ENCODE measurements at regions of chr7 and their contacts with region 1.

Region 1: GRCh38 chr7:22660732-22661131 is 66.3 kb upstream of the IL6 start:
- DNase-seq: no peak
- H3K4me3 ChIP-seq: no peak overlapping the region
- H3K4me3 Mint-ChIP-seq: no peak overlapping the region
- H3K27ac ChIP-seq: no peak overlapping the region
- H3K27ac Mint-ChIP-seq: peak overlapping the region in 1 of 7 donors; percentile 52
- H3K4me1 ChIP-seq: peaks cover 37 to 38% of the 10 kb centered on the region in 2 donors
- H3K4me1 Mint-ChIP-seq: peaks cover 44% of the 10 kb centered on the region
- H3K27me3 ChIP-seq: no peaks in the 10 kb centered on the region
- H3K27me3 Mint-ChIP-seq: peaks cover 0 to 6% (median 4%) of the 10 kb centered on the region in 3 donors
- CTCF ChIP-seq: peak; percentile 18

Region 2: GRCh38 chr7:22569586-22570321 is 91.0 kb before region 1 on chr7:
- intact Hi-C with region 1: loop called in 1 of 2 experiments (anchors 5 kb)
- DNase-seq: peak; percentile 88 to 97 (median 93)
- H3K4me3 ChIP-seq: peak overlapping the region in 1 of 3 experiments; percentile 11
- H3K4me3 Mint-ChIP-seq: peak overlapping the region in 1 of 2 donors; percentile 59
- H3K27ac ChIP-seq: no peak overlapping the region
- H3K27ac Mint-ChIP-seq: peak overlapping the region in 6 of 7 donors; percentile 15 to 81 (median 72)
- H3K4me1 ChIP-seq: peaks cover 60 to 62% of the 10 kb centered on the region in 2 donors
- H3K4me1 Mint-ChIP-seq: peaks cover 60% of the 10 kb centered on the region
- H3K27me3 ChIP-seq: peaks cover 18 to 20% of the 10 kb centered on the region in 2 donors
- H3K27me3 Mint-ChIP-seq: peaks cover 26 to 32% (median 30%) of the 10 kb centered on the region in 3 donors
- CTCF ChIP-seq: no peak

Region 3: DNA sequence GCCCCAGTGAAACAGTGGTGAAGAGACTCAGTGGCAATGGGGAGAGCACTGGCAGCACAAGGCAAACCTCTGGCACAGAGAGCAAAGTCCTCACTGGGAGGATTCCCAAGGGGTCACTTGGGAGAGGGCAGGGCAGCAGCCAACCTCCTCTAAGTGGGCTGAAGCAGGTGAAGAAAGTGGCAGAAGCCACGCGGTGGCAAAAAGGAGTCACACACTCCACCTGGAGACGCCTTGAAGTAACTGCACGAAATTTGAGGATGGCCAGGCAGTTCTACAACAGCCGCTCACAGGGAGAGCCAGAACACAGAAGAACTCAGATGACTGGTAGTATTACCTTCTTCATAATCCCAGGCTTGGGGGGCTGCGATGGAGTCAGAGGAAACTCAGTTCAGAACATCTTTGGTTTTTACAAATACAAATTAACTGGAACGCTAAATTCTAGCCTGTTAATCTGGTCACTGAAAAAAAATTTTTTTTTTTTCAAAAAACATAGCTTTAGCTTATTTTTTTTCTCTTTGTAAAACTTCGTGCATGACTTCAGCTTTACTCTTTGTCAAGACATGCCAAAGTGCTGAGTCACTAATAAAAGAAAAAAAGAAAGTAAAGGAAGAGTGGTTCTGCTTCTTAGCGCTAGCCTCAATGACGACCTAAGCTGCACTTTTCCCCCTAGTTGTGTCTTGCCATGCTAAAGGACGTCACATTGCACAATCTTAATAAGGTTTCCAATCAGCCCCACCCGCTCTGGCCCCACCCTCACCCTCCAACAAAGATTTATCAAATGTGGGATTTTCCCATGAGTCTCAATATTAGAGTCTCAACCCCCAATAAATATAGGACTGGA is 65.8 kb after region 1 on chr7:
- intact Hi-C with region 1: loop called (anchors 10 kb)
- DNase-seq: peak; percentile 50 to 78 (median 52)
- H3K4me3 ChIP-seq: peak overlapping the region in 2 of 3 experiments; percentile 10 to 62
- H3K4me3 Mint-ChIP-seq: peak overlapping the region; percentile 71 to 89
- H3K27ac ChIP-seq: no peak overlapping the region
- H3K27ac Mint-ChIP-seq: peak overlapping the region in 6 of 7 donors; percentile 41 to 89 (median 84)
- H3K4me1 ChIP-seq: peaks cover 53 to 61% of the 10 kb centered on the region in 2 donors
- H3K4me1 Mint-ChIP-seq: peaks cover 65% of the 10 kb centered on the region
- H3K27me3 ChIP-seq: peaks cover 7 to 14% of the 10 kb centered on the region in 2 donors
- H3K27me3 Mint-ChIP-seq: peaks cover 3 to 9% (median 6%) of the 10 kb centered on the region in 3 donors
- CTCF ChIP-seq: peak; percentile 70

Measured in CD14-positive monocyte (primary cell).